ENCODE measurements at regions of chr2 and their contacts with region 1.

Region 1: DNA sequence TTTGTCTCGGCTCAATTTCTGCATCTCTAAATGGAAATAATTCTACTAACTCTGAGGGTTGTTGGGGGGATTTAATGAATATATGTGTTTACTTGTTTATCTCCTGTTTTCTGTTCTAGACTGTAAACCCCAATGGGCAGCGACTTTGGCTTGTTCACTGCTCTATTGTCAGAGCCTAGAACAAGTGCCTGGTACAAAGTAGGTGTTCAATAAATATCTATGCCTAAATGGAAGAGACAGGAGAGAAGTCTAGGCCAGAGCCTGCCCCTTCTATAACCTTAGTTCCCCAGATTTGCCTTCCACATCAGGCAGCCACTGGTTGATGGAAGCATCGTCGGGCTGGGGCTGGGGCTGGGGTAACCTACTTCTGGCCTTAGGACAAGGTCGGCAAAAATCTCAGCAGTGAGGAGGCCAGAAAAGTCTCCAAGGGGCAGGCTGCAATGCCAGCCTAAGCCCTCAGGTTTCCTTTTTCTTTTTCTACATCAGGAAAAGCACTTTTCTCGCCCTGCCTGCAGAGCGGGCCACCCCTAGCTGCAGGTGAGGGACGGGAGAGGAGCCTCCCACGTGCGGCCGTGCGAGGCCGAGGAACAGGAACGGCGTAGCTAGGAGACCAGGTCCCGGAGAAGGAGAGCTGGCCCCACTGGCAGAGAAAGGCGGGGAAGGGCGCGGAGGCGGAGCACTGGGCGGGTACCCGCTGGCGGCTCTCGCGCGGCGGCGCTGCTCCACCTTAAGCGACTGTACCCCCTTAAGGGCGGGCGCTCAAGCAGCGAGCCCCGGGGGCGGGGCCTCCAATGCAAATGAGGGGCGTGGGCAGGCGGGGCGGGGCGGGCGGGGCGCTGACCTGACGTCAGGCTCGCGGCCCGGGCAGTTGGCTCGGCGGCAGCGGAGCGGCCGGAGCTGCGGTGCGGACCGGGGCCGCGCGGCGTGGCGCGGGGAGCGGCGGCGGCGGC is at the start of gene CNNM4:
- DNase-seq: peak; percentile 94
- ATAC-seq: peak; percentile 97
- H3K4me3 Mint-ChIP-seq: peak within 1 kb of the TSS; percentile 77
- H3K27ac Mint-ChIP-seq: peak within 1 kb of the TSS; percentile 83
- H3K4me1 Mint-ChIP-seq: peaks cover 48% of the 10 kb centered on the region
- H3K27me3 Mint-ChIP-seq: no peaks in the 10 kb centered on the region
- total RNA-seq, gene CNNM4: 7.6 to 7.9 TPM

Region 2: GRCh38 chr2:96602330-96602823 is 157.9 kb before region 1 on chr2:
- CTCF ChIA-PET with region 1: interaction called, 14 read pairs
- DNase-seq: peak; percentile 53
- ATAC-seq: no peak
- H3K4me3 Mint-ChIP-seq: no peak overlapping the region
- H3K27ac Mint-ChIP-seq: no peak overlapping the region
- H3K4me1 Mint-ChIP-seq: peaks cover 40% of the 10 kb centered on the region
- H3K27me3 Mint-ChIP-seq: no peaks in the 10 kb centered on the region

Region 3: DNA sequence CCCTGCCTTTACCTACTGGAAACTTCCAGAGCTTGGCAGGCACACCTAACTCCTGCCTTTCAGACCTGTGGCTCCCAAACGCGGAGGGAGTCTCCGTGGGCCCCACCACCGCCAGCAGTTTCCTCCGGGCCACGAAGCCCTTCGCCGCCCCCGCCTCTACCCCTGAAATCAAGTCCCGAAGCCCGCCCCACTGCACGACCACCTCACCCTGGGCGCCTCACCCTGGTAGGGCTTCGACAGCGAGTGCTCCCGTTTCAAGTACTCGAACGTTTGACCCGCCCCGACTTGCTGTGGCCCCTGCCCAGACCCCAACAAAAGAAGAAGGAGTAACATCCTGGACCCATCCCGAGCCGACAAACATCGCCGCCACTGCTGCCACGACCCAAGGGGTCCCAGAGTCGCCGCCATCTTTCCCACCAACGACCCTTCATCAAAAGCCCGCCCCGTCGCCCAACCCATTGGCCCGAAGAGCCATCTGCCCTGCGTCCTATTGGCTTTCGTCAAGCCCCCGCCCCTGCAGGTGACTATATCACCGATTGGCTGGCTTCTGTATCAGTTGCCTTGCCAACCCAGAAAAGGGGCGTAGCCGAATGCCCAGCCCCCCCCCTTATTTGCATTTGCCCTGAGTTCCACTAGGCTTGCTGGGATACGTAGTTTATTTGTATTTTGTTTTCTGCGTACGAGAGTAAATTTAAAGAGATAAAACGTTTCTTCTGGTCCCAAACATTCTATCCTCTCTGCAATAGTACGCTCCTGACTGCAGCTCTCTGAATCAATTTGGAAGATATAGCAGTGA is 20.5 kb before region 1 on chr2 and contains the start of gene LMAN2L:
- CTCF ChIA-PET with region 1: interaction called, 14 read pairs
- DNase-seq: peak; percentile 100
- ATAC-seq: peak; percentile 100
- H3K4me3 Mint-ChIP-seq: peak within 1 kb of the TSS; percentile 97
- H3K27ac Mint-ChIP-seq: peak within 1 kb of the TSS; percentile 87
- H3K4me1 Mint-ChIP-seq: peaks cover 38% of the 10 kb centered on the region
- H3K27me3 Mint-ChIP-seq: no peaks in the 10 kb centered on the region
- total RNA-seq, gene LMAN2L: 7.3 to 7.5 TPM

Region 4: GRCh38 chr2:96788442-96789244 is 28.3 kb after region 1 on chr2:
- CTCF ChIA-PET with region 1: interaction called, 11 read pairs
- DNase-seq: no peak
- ATAC-seq: no peak
- H3K4me3 Mint-ChIP-seq: no peak overlapping the region
- H3K27ac Mint-ChIP-seq: no peak overlapping the region
- H3K4me1 Mint-ChIP-seq: no peaks in the 10 kb centered on the region
- H3K27me3 Mint-ChIP-seq: no peaks in the 10 kb centered on the region

Region 5: GRCh38 chr2:96816128-96816835 is 56.0 kb after region 1 on chr2 and contains the start of gene CNNM3:
- CTCF ChIA-PET with region 1: interaction called, 14 read pairs
- DNase-seq: peak; percentile 96
- ATAC-seq: peak; percentile 94
- H3K4me3 Mint-ChIP-seq: peak within 1 kb of the TSS; percentile 84
- H3K27ac Mint-ChIP-seq: peak within 1 kb of the TSS; percentile 58
- H3K4me1 Mint-ChIP-seq: peaks cover 47% of the 10 kb centered on the region
- H3K27me3 Mint-ChIP-seq: no peaks in the 10 kb centered on the region
- total RNA-seq, gene CNNM3: 28.0 to 30.5 TPM

Region 6: GRCh38 chr2:96832754-96833507 is 72.6 kb after region 1 on chr2:
- CTCF ChIA-PET with region 1: no interaction called
- DNase-seq: no peak
- ATAC-seq: no peak
- H3K4me3 Mint-ChIP-seq: no peak overlapping the region
- H3K27ac Mint-ChIP-seq: no peak overlapping the region
- H3K4me1 Mint-ChIP-seq: no peaks in the 10 kb centered on the region
- H3K27me3 Mint-ChIP-seq: no peaks in the 10 kb centered on the region

Region 7: DNA sequence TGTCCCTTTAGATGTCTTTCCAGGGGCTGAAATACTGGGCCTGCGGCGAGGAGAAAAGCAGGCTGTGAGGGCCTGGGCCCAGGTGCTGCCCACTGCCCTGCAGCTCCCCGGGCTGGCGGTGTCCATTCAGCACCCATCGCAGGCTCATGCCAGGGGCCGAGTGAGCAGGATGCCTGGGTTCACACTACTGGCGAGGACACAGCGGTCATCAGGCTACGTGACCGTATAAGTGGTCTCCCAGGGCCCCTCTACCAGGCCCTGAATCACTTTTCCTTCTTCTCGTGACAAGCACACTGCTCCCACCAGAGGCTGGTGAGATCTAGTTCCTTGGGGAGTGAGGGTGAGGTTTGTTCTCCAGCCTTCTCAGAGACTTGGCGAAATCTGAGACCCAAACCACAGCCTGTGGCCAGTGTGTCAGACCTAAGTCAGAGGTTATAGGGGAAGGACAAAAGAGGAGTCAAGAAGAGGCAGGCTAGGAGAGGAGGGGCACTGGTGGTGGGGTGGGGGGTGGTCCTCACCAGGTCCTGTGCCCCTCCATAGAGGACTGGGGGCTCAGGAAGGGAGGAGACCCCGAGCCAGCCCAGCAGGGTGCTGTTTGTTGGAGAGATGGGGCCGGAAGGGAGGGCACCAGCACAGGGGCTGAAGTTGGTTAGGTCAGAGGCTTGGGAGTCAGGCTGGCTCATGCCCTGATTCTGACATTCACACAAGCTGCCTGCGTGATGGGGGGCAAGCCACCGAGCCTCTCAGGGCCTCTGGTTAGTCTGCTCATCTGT is 116.1 kb after region 1 on chr2:
- CTCF ChIA-PET with region 1: no interaction called
- DNase-seq: no peak
- ATAC-seq: no peak
- H3K4me3 Mint-ChIP-seq: no peak overlapping the region
- H3K27ac Mint-ChIP-seq: no peak overlapping the region
- H3K4me1 Mint-ChIP-seq: peaks cover 9% of the 10 kb centered on the region
- H3K27me3 Mint-ChIP-seq: peaks cover 3% of the 10 kb centered on the region

Measured in activated CD8-positive, alpha-beta memory T cell treated with anti-CD3 and anti-CD28 coated beads, Interleukin-2, amount 10 ng/mL, durations not matched to agents 7 days and 5 days (primary cell).